ENCODE measurements at regions of chr1 and their contacts with region 1.

Region 1: DNA sequence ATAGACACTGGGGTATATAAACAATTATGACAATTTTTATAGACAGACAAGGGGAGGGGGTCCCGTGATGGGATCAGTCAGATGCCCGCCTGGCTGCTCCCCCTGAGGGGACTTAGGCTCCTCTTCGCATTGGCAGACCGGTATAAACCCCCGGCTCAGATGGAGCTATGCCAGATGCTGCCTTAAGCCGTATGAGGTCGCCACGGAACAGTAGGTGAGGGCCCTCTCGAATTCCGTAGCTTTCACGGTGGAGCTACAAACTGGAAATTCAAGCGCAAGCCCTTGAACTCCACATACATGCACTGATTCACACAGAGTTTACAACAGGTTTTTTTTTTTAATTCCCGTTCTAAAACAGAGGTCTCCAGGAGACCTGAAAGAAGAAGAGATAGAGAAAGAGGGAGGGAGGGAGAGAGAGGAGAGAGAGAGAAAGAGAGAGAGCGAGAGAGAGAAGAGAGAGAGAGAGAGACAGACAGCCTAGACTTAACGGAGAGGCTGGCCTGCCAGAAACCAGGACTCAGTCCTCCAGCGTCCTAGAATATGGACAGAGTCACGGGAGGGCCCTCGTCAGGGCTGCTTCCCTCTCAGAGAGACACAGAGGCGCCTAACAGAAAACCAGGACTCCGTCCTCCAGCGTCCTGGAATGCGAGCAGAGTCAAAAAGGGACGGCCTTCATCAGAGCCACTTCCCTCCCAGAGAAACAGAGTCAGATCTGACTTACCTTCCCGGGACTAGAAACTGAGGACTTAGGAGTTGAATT is 24.4 kb upstream of the TMEM54 start:
- DNase-seq: peak; percentile 45
- H3K4me3 ChIP-seq: peak overlapping the region in 1 of 4 donors; percentile 42
- H3K27ac ChIP-seq: peak overlapping the region; percentile 24 to 77 (median 52)
- H3K4me1 ChIP-seq: peaks cover 0 to 18% (median 15%) of the 10 kb centered on the region in 4 donors
- H3K27me3 ChIP-seq: peaks cover 29% of the 10 kb centered on the region
- CTCF ChIP-seq: no peak
- EP300 ChIP-seq: no peak
- POLR2A ChIP-seq: no peak

Region 2: DNA sequence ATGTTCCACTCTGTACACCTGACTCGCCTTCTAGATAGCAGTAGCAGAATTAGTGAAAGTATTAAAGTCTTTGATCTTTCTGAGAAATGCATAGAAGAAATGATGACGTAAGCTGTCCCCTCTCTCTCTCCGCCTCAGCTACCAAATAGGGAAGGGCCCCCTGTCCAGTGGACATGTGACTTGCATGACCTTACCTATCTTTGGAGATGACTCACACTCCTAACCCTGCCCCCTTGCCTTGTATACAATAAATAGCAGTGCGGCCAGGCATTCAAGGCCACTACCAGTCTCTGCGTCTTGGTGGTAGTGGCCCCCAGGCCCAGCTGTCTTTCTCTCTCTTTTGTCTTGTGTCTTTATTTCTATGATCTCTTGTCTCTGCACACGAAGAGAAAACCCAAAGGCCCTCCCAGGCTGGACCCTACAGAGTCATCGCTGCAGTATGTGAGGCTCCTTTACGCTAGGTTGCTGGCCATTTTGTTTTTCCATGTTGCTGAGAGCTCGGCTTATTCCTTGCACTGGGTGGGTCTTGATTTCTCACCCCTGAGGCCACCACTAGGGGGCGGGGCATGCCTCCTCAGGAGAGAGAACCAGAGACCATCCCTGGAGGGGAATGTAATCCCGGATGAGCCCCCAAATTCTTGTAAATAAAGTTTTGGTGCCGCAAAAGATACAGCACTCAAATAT is 476.7 kb before region 1 on chr1:
- in situ Hi-C with region 1: no loop called
- intact Hi-C with region 1: no loop called
- DNase-seq: no peak
- H3K4me3 ChIP-seq: no peak overlapping the region
- H3K27ac ChIP-seq: no peak overlapping the region
- H3K4me1 ChIP-seq: peaks cover 0 to 5% (median 0%) of the 10 kb centered on the region in 4 donors
- H3K27me3 ChIP-seq: peaks cover 4% of the 10 kb centered on the region
- CTCF ChIP-seq: no peak
- EP300 ChIP-seq: no peak
- POLR2A ChIP-seq: no peak

Region 3: DNA sequence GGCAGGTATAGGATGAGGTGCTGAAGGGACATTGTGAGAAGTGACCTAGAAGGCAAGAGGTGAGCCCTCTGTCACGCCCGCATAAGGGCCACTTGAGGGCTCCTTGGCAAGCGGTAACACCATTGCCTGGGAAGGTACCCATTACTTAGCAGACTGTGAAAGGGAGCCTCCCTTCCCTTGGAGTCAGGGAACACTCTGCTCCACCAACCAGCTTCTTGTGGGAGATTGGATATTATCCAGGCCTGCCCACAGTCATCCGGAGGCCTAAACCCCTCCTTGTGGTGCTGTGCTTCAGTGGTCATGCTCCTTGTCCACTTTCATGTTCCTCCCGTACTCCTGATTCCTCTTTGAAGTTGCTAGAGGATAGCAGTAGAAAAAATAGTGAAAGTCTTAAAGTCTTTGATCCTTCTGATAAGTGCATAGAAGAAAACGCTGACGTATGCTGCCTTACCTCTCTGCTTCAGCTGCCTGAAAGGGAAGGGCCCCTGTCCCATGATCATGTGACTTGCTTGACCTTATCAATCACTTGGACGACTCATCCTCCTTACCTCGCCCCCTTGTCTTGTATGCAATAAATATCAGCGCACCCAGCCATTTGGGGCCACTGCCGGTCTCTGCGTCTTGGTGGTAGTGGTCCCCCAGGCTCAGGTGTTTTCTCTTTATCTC is 258.5 kb before region 1 on chr1:
- in situ Hi-C with region 1: no loop called
- intact Hi-C with region 1: no loop called
- DNase-seq: no peak
- H3K4me3 ChIP-seq: no peak overlapping the region
- H3K27ac ChIP-seq: no peak overlapping the region
- H3K4me1 ChIP-seq: peaks cover 0 to 3% (median 0%) of the 10 kb centered on the region in 4 donors
- H3K27me3 ChIP-seq: no peaks in the 10 kb centered on the region
- CTCF ChIP-seq: no peak
- EP300 ChIP-seq: no peak
- POLR2A ChIP-seq: no peak

Region 4: GRCh38 chr1:32884726-32885125 is 40.9 kb before region 1 on chr1:
- in situ Hi-C with region 1: no loop called
- intact Hi-C with region 1: loop called (anchors 1 kb)
- DNase-seq: no peak
- H3K4me3 ChIP-seq: no peak overlapping the region
- H3K27ac ChIP-seq: no peak overlapping the region
- H3K4me1 ChIP-seq: peaks cover 0 to 12% (median 6%) of the 10 kb centered on the region in 4 donors
- H3K27me3 ChIP-seq: peaks cover 53% of the 10 kb centered on the region
- CTCF ChIP-seq: no peak
- EP300 ChIP-seq: no peak
- POLR2A ChIP-seq: no peak